GM10248 (cell line): ENCODE measurements at regions of chr11 and their contacts with region 1.

Region 1: DNA sequence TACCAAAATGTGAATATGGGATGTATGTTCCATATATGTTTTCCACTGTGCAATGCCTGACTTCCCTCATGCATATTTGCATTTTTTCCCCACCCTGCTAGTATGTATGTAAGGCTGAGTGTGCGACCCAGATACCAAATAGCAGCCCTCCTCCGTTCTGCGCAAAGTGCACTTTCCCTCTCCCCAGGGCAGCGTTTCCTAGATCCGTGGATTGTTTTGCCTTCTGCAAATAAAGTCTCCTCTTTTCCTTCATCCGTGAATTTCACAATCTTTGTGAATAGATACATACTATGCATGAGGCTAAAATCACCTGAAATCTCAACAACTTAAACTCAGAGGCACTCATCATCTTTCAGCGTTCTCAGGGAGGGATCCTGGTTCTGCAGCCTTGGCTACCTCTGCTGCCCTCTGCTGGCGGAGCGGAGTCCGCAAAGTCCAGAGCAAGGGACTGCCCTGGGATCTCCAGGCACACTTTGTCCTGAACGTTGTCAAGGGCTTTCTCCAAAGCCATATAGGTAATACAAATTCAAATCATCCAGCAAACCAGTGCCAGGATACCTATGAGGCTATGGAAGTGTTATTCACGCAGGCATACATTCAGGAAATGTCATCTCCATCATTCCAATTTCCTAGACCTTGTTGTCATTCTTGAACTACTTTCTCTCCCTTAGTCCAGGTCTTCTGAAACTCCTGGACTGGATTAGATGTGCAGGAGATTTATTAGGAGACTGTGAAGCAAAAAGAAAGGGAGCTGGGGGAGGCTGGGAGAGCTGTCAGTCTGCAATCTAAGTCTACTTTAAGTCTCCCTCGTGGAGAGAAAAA is 53.1 kb downstream of the CNTF start:
- DNase-seq: peak; percentile 80
- CTCF ChIP-seq: peak; percentile 95

Region 2: DNA sequence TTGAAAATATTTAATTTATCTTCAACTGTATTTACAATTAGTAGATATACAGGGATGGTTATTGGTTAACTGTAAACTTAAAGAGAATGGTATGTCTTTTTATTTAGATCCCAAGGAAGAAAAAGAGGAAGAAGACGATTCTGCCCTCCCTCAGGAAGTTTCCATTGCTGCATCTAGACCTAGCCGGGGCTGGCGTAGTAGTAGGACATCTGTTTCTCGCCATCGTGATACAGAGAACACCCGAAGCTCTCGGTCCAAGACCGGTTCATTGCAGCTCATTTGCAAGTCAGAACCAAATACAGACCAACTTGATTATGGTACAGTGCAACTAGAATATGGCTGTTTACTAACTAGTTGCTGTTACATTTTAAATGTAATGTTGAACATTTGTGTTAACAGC is 65.8 kb before region 1 on chr11:
- CTCF ChIA-PET with region 1: no interaction called
- POLR2A ChIA-PET with region 1: no interaction called
- DNase-seq: no peak
- CTCF ChIP-seq: no peak

Region 3: GRCh38 chr11:58654079-58654907 is 21.3 kb before region 1 on chr11:
- CTCF ChIA-PET with region 1: interaction called, 97 read pairs
- POLR2A ChIA-PET with region 1: no interaction called
- DNase-seq: peak; percentile 69
- CTCF ChIP-seq: peak; percentile 93

Region 4: GRCh38 chr11:58688789-58689503 is 13.4 kb after region 1 on chr11:
- CTCF ChIA-PET with region 1: interaction called, 10 read pairs
- POLR2A ChIA-PET with region 1: no interaction called
- DNase-seq: no peak
- CTCF ChIP-seq: no peak